GM12878 (cell line): ENCODE measurements at regions of chr1 and their contacts with region 1.

Region 1: GRCh38 chr1:151443846-151444782 is 15.2 kb downstream of the POGZ start:
- DNase-seq: peak; percentile 38
- ATAC-seq: peak; percentile 94
- H3K4me3 ChIP-seq: 0 out of 2 replicates have a peak overlapping the region, but pooled peaks have one; percentile 5
- H3K27ac ChIP-seq: peak overlapping the region; percentile 40; the same call in 1 of the 2 replicates
- H3K4me1 ChIP-seq: peaks cover 15% of the 10 kb centered on the region
- H3K27me3 ChIP-seq: no peaks in the 10 kb centered on the region
- CTCF ChIP-seq: peak; percentile 63 to 86 (median 78)
- EP300 ChIP-seq: no peak
- POLR2A ChIP-seq: no peak
- RAD21 ChIP-seq: peak; percentile 79

Region 2: GRCh38 chr1:151377150-151377884 is 66.8 kb before region 1 on chr1:
- CTCF ChIA-PET with region 1: no interaction called
- POLR2A ChIA-PET with region 1: no interaction called
- RAD21 ChIA-PET with region 1: no interaction called
- SMC1A ChIA-PET with region 1: no interaction called
- in situ Hi-C with region 1: no loop called
- intact Hi-C with region 1: no loop called
- DNase-seq: no peak
- ATAC-seq: no peak
- H3K4me3 ChIP-seq: no peak overlapping the region
- H3K27ac ChIP-seq: no peak overlapping the region
- H3K4me1 ChIP-seq: no peaks in the 10 kb centered on the region
- H3K27me3 ChIP-seq: no peaks in the 10 kb centered on the region
- CTCF ChIP-seq: no peak
- EP300 ChIP-seq: no peak
- POLR2A ChIP-seq: no peak
- RAD21 ChIP-seq: no peak

Region 3: DNA sequence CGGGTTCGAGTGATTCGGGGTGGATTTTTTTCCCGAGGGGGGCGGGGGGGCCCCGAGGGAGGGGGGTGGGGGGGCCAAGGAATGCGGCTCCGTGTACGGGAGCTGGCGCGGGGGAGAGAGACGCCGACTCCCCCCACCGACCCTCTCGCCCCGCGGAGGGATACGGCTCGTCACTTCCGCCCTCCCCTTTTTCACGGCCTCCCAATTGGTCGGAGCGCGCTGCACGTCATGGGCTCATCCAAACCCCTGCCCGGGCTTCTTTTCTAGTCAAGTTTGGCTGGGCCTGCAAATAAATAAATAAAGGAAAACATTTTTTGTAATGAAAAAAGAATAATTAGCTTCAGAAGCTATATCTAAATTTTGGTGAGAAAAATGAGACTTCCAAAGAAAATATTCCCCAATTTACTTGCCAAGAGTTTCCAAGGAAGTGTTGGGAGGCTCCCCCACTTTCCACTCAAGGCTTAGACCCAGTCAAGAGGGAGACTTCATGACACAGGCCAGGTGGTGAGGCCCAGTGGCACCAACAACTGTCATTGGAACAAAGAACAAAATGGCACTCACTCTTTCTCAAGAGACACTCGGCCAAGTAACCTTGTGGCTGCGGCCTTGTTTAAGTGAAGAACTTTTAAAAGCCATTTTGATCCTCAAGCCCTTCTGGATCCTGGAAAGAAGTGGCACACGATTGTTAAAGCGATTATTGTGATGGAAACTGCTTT is 15.4 kb after region 1 on chr1 and contains the start of gene POGZ:
- CTCF ChIA-PET with region 1: interaction called, 33 read pairs
- POLR2A ChIA-PET with region 1: interaction called, 5 read pairs
- RAD21 ChIA-PET with region 1: interaction called, 20 read pairs
- SMC1A ChIA-PET with region 1: interaction called, 30 read pairs
- in situ Hi-C with region 1: no loop called
- intact Hi-C with region 1: no loop called
- DNase-seq: peak; percentile 72
- ATAC-seq: peak; percentile 85
- H3K4me3 ChIP-seq: peak within 1 kb of the TSS; percentile 94
- H3K27ac ChIP-seq: peak within 1 kb of the TSS; percentile 89
- H3K4me1 ChIP-seq: peaks cover 6% of the 10 kb centered on the region
- H3K27me3 ChIP-seq: no peaks in the 10 kb centered on the region
- CTCF ChIP-seq: no peak
- EP300 ChIP-seq: 0 out of 4 replicates have a peak, but pooled peaks of 1 of the 2 experiments have one; percentile 25
- POLR2A ChIP-seq: peak; percentile 83
- RAD21 ChIP-seq: no peak
- polyA plus RNA-seq, gene POGZ: 11.3 to 26.9 TPM

Region 4: DNA sequence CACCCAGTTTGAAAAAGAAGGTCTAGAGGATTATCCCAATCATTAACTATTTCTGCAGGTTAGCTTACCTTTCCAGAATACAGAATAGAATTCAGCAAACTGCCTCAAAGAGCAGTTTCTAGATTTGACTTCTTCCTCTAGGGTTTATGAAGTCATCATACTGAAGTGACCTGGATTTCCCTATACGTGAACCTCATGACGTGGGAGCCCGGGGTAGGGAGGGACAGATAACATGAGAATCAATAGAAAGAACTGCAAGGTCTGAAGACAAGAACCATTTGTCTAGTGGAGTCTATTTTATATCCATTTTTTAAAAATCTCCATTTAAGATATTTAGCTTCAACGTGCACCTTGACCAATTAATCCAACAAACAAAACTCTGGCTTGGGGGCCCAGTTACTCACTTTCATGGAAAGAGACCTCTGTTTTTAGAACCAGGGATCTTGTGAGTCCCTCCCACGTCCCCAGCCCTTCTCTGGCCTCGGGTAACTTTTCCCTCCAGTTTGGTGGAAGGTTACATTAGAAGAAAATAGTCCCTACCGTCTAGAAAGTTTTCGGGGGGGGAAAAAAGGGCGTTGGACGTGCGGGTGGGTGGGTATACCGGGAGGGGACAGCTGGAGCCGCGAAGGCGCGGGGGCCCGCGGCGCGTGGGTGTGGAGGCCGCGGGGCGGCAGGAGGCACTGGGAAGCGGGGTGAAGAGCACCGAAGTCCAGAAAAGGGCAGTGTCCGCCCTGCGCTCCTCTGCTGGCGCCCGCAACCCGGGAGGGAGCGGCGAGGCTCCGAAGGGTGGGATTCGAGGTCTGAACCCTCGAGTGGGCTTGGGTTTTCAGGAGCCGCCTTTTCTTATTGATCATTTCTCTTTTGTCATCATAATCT is 29.0 kb after region 1 on chr1:
- CTCF ChIA-PET with region 1: interaction called, 17 read pairs
- POLR2A ChIA-PET with region 1: interaction called, 3 read pairs
- RAD21 ChIA-PET with region 1: interaction called, 8 read pairs
- SMC1A ChIA-PET with region 1: interaction called, 8 read pairs
- in situ Hi-C with region 1: no loop called
- intact Hi-C with region 1: no loop called
- DNase-seq: no peak
- ATAC-seq: peak; percentile 49
- H3K4me3 ChIP-seq: peak overlapping the region; percentile 65
- H3K27ac ChIP-seq: peak overlapping the region; percentile 37
- H3K4me1 ChIP-seq: peaks cover 18% of the 10 kb centered on the region
- H3K27me3 ChIP-seq: no peaks in the 10 kb centered on the region
- CTCF ChIP-seq: no peak
- EP300 ChIP-seq: no peak
- POLR2A ChIP-seq: peak; percentile 47
- RAD21 ChIP-seq: 0 out of 2 replicates have a peak, but pooled peaks have one; percentile 5

Region 5: DNA sequence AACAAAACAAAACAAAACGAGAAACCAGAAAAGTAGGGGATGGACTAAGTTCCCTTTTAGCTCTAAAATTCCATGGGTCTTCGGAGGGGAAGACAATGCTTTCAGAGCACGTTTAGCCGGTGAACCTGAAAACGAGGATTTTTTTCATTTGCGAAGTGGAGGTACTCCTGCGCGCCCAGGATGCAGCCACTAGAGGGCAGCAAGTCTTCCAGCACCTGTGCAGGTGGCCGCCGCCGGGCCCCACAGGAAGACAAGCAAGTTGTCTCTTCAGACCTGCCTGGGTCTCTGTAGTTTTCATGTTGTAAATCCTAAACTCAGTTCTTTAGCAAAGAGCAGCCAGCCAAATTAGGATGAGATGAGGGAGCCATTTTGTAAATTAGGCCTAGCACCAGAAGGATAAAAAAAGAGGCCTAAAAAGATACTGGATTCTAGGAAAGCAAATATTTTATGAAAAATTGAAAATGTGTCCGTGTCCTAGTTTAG is 150.1 kb after region 1 on chr1:
- CTCF ChIA-PET with region 1: interaction called, 14 read pairs
- POLR2A ChIA-PET with region 1: no interaction called
- RAD21 ChIA-PET with region 1: interaction called, 9 read pairs
- SMC1A ChIA-PET with region 1: interaction called, 4 read pairs
- in situ Hi-C with region 1: no loop called
- intact Hi-C with region 1: loop called (anchors 5 kb)
- DNase-seq: no peak
- ATAC-seq: peak; percentile 99
- H3K4me3 ChIP-seq: no peak overlapping the region
- H3K27ac ChIP-seq: no peak overlapping the region
- H3K4me1 ChIP-seq: no peaks in the 10 kb centered on the region
- H3K27me3 ChIP-seq: no peaks in the 10 kb centered on the region; a peak in 1 of 4 replicates
- CTCF ChIP-seq: peak; percentile 95 to 97 (median 95)
- EP300 ChIP-seq: no peak
- POLR2A ChIP-seq: no peak
- RAD21 ChIP-seq: peak; percentile 81

Region 6: GRCh38 chr1:151739590-151740375 is 295.7 kb after region 1 on chr1:
- CTCF ChIA-PET with region 1: interaction called, 16 read pairs
- POLR2A ChIA-PET with region 1: no interaction called
- RAD21 ChIA-PET with region 1: interaction called, 12 read pairs
- SMC1A ChIA-PET with region 1: interaction called, 10 read pairs
- in situ Hi-C with region 1: no loop called
- intact Hi-C with region 1: loop called (anchors 2 kb)
- DNase-seq: no peak
- ATAC-seq: no peak
- H3K4me3 ChIP-seq: no peak overlapping the region
- H3K27ac ChIP-seq: no peak overlapping the region
- H3K4me1 ChIP-seq: no peaks in the 10 kb centered on the region
- H3K27me3 ChIP-seq: no peaks in the 10 kb centered on the region; a peak in 1 of 4 replicates
- CTCF ChIP-seq: no peak
- EP300 ChIP-seq: no peak
- POLR2A ChIP-seq: no peak
- RAD21 ChIP-seq: no peak

Region 7: GRCh38 chr1:152061952-152062351 is 617.8 kb after region 1 on chr1:
- CTCF ChIA-PET with region 1: no interaction called
- POLR2A ChIA-PET with region 1: no interaction called
- RAD21 ChIA-PET with region 1: no interaction called
- SMC1A ChIA-PET with region 1: no interaction called
- in situ Hi-C with region 1: no loop called
- intact Hi-C with region 1: no loop called
- DNase-seq: no peak
- ATAC-seq: no peak
- H3K4me3 ChIP-seq: no peak overlapping the region
- H3K27ac ChIP-seq: no peak overlapping the region
- H3K4me1 ChIP-seq: no peaks in the 10 kb centered on the region
- H3K27me3 ChIP-seq: no peaks in the 10 kb centered on the region
- CTCF ChIP-seq: no peak
- EP300 ChIP-seq: no peak
- POLR2A ChIP-seq: no peak
- RAD21 ChIP-seq: 0 out of 2 replicates have a peak, but pooled peaks have one; percentile 9